ENCODE measurements at regions of chr11 and their contacts with region 1.

Region 1: GRCh38 chr11:57644748-57645688 is 4.7 kb downstream of the YPEL4 start:
- DNase-seq: peak; percentile 85
- CTCF ChIP-seq: peak; percentile 77

Region 2: GRCh38 chr11:57499413-57499982 is 145.5 kb before region 1 on chr11:
- in situ Hi-C with region 1: loop called (anchors 10 kb)
- DNase-seq: peak; percentile 83
- CTCF ChIP-seq: no peak

Region 3: GRCh38 chr11:57567515-57568329 is 77.3 kb before region 1 on chr11 and contains the start of gene UBE2L6:
- in situ Hi-C with region 1: loop called (anchors 5 kb)
- DNase-seq: peak; percentile 88
- CTCF ChIP-seq: peak; percentile 70

Region 4: GRCh38 chr11:57842873-57843272 is 197.9 kb after region 1 on chr11:
- in situ Hi-C with region 1: no loop called
- DNase-seq: no peak
- CTCF ChIP-seq: no peak

Measured in GM13976 (cell line).